Activated CD4-positive, alpha-beta T cell treated with anti-CD3 and anti-CD28 coated beads, Interleukin-2, amount 10 ng/mL, durations not matched to agents 24 days and 14 days (primary cell): ENCODE measurements at regions of chr1 and their contacts with region 1.

Region 1: DNA sequence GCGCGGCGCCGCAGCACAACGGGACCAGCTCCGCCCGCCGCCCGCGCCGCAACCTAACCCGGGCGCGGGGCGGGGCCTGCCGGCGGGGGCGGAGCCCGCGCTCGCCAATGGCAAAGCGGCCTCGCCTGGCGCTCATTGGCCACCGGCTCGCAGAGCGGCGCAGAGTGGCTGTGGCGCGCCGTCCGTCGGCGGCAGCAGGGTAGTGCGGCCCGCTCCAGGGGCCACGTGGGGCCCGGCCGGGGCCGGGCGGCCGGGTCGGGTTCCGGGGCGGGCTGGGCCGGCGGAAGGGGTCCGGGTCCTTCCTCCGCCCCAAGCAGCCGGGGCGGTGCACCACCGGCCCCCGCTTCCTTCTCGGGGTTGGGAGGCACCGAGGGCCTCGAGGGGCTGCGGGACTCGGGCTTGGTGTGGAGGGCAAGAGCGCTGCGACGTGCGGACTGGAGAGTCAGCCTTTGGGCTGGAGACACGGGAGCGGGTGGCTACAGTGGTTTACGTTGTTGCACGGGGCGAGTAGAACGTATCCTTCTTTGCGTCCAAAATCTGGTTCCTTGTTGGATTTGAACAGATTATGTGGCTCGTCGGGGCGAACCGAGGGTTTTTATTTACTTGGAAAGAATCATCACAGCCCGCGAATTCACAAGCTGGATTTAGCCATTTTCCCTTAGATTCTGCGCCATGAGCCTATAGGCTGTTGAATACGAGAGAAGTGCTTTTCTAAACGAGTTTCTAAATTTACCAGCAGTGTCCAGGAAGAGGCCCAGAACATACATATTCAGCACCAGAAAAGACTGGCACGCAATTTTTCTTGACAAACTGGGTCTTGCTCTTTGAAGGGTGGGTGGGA is at the start of gene SRM:
- DNase-seq: peak; percentile 98
- H3K4me3 Mint-ChIP-seq: peak within 1 kb of the TSS; percentile 98
- H3K27ac Mint-ChIP-seq: peak within 1 kb of the TSS; percentile 92
- H3K4me1 Mint-ChIP-seq: peaks cover 31% of the 10 kb centered on the region
- H3K27me3 Mint-ChIP-seq: no peaks in the 10 kb centered on the region
- total RNA-seq, gene SRM: 334 and 346 TPM in 2 replicates

Region 2: DNA sequence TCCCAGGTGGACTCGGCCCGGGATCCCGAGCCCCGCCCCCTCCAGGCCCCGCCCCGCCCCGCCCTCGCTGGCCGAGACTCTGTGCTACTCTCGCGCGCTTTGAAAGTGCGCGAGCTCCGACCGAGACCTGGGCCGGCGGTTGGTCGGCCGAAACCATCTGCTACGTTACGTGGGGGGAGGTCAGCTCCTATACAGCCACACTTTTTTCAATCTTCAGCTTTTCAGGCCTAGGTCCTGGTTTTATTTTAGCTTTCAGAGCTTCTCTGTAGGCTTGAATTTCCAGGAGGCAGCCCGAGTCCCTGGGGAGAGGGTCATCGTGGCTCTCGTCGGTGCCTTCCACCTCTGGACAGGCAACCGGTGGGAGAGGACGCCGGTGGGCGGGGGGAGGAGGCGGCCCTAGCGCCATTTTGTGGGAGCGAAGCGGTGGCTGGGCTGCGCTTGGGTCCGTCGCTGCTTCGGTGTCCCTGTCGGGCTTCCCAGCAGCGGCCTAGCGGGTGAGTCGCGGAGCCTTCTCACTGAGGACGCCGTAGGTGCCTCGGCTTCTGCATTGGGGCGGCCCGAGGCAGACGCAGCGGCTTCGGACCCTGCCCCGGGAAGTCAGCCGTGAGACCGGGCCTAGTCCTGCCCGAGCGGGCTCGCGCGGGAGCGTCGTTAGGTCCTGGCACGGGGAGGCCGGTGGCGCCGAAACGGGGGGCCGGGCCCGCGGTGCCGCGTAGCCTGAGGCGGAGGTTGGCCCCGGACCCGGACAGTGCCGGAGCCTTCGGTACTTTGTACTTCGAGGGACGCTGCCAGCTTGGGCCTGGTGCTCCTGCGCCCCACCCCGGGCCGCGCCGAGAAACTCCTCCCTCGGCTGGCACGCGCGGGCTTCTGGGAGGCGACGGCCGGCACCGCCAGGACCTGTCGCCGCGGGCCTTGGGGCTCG is 47.7 kb before region 1 on chr1 and contains the start of gene TARDBP:
- intact Hi-C with region 1: loop called (anchors 2 kb)
- DNase-seq: peak; percentile 97
- H3K4me3 Mint-ChIP-seq: peak within 1 kb of the TSS; percentile 88
- H3K27ac Mint-ChIP-seq: peak within 1 kb of the TSS; percentile 98
- H3K4me1 Mint-ChIP-seq: peaks cover 18% of the 10 kb centered on the region
- H3K27me3 Mint-ChIP-seq: no peaks in the 10 kb centered on the region
- total RNA-seq, gene TARDBP: 211 and 224 TPM in 2 replicates

Region 3: DNA sequence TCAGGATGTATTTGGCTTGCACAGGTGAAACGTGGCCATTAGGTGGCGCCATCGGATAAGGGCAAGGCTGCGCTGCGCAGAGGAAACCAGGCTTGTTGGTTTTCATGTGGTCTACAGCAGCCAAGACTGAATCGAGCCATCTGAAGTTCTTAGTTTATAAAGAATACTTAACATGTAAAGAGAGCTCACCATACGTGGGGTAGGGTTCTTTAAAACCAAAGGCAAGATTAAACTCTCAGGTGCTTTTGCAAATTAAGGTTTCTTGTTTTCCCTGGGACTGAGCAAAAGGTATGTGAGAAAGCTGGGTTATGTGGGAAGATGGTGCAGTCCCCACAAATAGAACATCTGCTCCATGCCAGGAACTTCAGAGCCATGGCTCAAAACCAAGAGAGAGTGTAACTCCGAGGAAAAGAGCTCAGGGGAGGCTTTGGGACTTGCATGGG is 22.4 kb before region 1 on chr1:
- intact Hi-C with region 1: loop called (anchors 2 kb)
- DNase-seq: peak; percentile 96
- H3K4me3 Mint-ChIP-seq: no peak overlapping the region
- H3K27ac Mint-ChIP-seq: no peak overlapping the region
- H3K4me1 Mint-ChIP-seq: peaks cover 7% of the 10 kb centered on the region
- H3K27me3 Mint-ChIP-seq: no peaks in the 10 kb centered on the region

Region 4: DNA sequence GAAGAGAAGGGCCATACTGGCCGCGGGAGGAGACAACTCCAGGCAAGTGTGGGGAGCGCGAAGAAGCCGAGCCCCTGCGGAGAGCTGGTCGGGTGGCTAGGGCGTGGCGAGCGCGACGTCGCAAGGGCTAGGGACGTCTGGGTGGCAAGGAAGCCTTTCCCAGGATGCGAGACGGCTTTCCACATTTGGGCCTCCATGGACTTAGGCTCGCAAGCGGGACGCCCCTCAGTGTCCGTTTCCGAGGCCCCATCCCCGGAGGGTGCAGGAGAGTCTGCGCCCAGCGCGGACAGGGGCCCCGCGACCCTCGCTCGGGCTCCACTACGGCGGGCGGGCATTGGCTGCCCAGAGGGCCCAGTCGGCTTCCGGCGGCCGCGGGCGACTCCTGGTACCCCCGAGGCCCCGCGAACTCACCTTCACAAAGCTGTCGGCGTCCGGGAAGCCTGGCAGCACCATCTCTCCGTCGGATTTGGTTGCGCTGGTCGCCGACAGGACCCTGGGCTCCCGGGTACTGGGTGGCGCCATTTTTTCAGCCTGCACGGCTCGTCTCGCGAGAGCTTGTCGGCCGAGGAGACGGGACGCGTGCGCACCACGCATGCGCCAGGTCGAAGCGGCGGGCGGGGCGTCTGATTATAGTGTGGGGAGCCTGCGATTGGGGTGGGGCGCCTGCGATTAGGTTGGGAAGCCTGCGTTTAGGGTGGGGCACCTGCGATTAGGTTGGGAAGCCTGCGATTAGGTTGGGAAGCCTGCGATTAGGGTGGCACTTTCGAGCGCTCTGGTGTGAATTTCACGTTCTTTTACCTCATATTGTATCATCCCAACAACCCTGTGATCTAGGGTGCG is 39.3 kb after region 1 on chr1 and contains the start of gene EXOSC10:
- intact Hi-C with region 1: loop called (anchors 2 kb)
- DNase-seq: peak; percentile 99
- H3K4me3 Mint-ChIP-seq: peak within 1 kb of the TSS; percentile 99
- H3K27ac Mint-ChIP-seq: peak within 1 kb of the TSS; percentile 96
- H3K4me1 Mint-ChIP-seq: peaks cover 12% of the 10 kb centered on the region
- H3K27me3 Mint-ChIP-seq: no peaks in the 10 kb centered on the region
- total RNA-seq, gene EXOSC10: 93.0 and 98.1 TPM in 2 replicates